ENCODE measurements at regions of chr7 and their contacts with region 1.

Region 1: GRCh38 chr7:136009488-136010079 is 32.4 kb upstream of the MTPN start:
- DNase-seq: no peak
- H3K4me3 ChIP-seq: no peak overlapping the region
- H3K27ac ChIP-seq: no peak overlapping the region
- H3K4me1 ChIP-seq: no peaks in the 10 kb centered on the region
- H3K27me3 ChIP-seq: no peaks in the 10 kb centered on the region
- CTCF ChIP-seq: peak; percentile 57 to 65 (median 61)
- EP300 ChIP-seq: no peak
- POLR2A ChIP-seq: no peak

Region 2: DNA sequence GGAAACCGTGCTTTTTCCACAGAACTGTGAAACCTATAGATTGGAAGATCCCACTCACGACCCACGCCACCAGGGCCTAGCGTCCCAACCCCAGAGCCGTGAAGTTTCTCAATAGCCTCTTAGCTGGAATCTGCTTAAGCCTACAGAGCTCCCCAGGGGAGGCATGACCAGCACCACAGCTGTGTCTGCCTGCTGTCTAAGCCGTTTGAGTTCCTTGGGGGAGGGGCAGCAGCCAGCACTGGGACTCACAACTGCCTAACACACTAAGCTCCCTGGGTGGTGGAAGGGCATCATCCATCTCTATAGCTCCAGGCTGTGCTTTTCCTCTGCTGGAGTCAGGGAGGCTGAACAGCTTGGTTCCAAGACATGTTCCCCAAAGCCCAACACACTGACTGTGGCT is 887.7 kb before region 1 on chr7:
- intact Hi-C with region 1: no loop called
- DNase-seq: no peak
- H3K4me3 ChIP-seq: no peak overlapping the region
- H3K27ac ChIP-seq: no peak overlapping the region
- H3K4me1 ChIP-seq: no peaks in the 10 kb centered on the region
- H3K27me3 ChIP-seq: no peaks in the 10 kb centered on the region
- CTCF ChIP-seq: no peak
- EP300 ChIP-seq: no peak
- POLR2A ChIP-seq: no peak

Region 3: DNA sequence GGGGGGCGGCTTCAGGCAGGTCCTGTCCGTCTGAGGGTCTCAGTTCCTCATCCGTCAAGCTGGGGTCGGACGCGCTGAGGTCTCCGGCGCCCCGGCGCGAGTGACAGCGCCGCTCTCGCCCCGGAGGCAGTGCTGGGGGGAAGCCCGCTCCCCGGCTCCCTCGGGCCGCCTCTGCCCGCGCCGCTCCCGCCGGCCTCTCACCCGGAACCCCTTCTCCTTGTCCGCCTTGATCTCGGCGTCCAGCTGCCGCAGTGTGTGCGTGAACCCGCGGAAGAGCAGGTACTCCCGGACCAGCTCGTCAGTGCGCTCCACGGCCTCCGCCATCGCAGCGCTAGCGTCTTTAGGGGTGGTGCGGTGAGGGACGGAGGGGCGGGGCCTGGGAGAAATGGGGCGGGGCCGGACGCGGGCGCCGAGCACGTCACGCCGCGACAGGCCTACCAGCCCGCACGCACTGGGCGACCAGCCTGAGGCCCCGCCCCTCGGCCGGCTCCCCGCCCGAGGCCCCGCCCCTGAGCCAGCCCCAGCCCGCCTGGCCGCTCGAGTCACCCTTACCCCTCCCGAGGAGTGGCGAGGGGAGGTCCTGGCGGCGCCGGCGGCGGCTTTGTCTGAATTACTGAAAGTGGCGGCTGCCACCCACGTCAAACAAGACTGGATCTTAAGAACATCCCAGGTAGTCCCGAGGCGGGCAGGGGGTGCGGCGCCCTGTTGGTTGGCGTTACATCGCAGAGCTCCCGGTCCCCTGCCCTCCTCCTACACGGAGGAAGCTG is 798.2 kb before region 1 on chr7 and contains the start of gene WDR91:
- intact Hi-C with region 1: no loop called
- DNase-seq: peak; percentile 96 to 99 (median 97)
- H3K4me3 ChIP-seq: peak within 1 kb of the TSS; percentile 68
- H3K27ac ChIP-seq: peak within 1 kb of the TSS; percentile 90 to 94
- H3K4me1 ChIP-seq: peaks cover 1% of the 10 kb centered on the region
- H3K27me3 ChIP-seq: no peaks in the 10 kb centered on the region
- CTCF ChIP-seq: peak in 2 of 3 donors; percentile 17
- EP300 ChIP-seq: no peak
- POLR2A ChIP-seq: peak; percentile 74
- total RNA-seq, gene WDR91: 14.7 to 56.3 (median 32.7) TPM

Region 4: DNA sequence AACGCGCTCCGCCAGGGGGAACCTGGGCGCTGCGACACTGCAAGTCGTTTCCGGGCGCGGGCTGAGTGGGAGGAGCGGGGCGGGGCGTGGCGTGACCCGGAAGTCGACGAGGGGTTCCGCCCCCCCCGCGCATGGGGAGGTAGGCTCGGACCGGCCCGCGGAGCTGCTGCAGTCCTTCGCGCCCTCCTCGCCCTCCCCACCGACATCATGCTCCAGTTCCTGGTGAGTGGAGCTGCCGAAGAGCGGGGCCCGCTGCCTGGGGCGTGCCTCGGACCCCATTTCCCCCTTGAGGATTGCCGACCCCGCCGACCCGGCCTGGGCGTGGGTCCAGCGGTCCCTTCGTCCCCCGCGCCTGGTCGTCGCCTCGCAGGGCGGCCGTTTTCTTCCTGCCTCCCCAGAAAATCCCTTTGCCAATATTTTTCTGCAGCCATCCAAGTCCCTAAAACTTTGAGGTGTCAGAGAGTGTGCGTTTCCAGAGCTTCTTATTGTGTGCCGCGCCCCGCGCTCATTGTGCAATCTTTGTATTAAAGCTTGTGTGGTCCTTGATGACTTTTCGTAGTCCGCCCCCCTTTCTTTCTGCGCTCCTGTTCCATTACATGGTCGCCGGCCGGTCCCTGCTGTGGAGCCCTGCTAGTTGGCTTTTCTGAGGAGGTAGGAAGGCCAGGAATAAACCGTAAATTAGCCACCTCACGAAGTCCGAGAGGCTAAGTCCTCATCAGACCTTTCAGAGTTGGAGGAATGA is 347.0 kb before region 1 on chr7 and contains the start of gene STMP1:
- intact Hi-C with region 1: loop called in 1 of 4 experiments (anchors 10 kb)
- DNase-seq: peak; percentile 95 to 98 (median 98)
- H3K4me3 ChIP-seq: peak within 1 kb of the TSS; percentile 62
- H3K27ac ChIP-seq: peak within 1 kb of the TSS; percentile 81 to 86
- H3K4me1 ChIP-seq: peaks cover 3% of the 10 kb centered on the region
- H3K27me3 ChIP-seq: no peaks in the 10 kb centered on the region
- CTCF ChIP-seq: peak in 1 of 3 donors; percentile 77
- EP300 ChIP-seq: no peak
- POLR2A ChIP-seq: peak; percentile 85
- total RNA-seq, gene STMP1: 11.0 to 24.3 (median 19.7) TPM

Region 5: DNA sequence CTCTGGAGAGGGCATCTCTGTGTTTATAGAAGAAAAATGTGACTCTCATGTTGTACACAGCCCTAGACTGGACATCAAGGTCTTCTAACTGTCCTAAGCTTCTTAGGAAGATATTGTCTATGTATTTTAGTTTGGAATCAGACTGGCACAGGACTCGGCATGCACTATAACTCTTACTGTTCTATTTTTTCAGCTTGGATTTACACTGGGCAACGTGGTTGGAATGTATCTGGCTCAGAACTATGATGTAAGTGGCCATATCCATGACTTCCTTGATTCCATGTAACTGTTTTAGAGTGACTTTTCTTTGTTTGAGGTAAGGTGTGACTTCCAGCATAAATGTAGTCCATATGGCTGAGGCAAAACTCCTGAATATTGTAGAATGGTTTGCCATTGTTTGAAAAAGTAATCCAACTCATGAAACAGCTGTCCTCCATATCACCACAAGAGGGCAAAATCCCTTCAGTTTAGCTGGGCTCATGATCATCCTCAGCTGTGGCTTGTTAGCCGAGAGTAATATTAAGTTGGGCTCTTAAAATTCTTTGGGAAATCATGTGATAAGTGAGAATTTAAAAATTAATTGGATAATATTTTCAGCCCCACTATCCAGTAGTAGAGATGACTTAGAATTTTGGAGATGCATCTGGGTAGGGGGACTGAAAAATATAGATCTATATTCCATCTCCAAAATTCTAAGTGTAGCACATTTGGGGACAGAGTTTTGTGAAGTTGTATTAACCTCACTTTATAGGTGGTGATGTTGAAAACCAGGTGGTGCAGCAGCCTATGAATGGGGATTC is 336.8 kb before region 1 on chr7:
- intact Hi-C with region 1: loop called in 2 of 4 experiments (anchors 10 kb)
- DNase-seq: peak in 1 of 5 donors; percentile 34
- H3K4me3 ChIP-seq: no peak overlapping the region
- H3K27ac ChIP-seq: no peak overlapping the region
- H3K4me1 ChIP-seq: no peaks in the 10 kb centered on the region
- H3K27me3 ChIP-seq: no peaks in the 10 kb centered on the region
- CTCF ChIP-seq: peak; percentile 51 to 76 (median 60)
- EP300 ChIP-seq: no peak
- POLR2A ChIP-seq: no peak

Region 6: DNA sequence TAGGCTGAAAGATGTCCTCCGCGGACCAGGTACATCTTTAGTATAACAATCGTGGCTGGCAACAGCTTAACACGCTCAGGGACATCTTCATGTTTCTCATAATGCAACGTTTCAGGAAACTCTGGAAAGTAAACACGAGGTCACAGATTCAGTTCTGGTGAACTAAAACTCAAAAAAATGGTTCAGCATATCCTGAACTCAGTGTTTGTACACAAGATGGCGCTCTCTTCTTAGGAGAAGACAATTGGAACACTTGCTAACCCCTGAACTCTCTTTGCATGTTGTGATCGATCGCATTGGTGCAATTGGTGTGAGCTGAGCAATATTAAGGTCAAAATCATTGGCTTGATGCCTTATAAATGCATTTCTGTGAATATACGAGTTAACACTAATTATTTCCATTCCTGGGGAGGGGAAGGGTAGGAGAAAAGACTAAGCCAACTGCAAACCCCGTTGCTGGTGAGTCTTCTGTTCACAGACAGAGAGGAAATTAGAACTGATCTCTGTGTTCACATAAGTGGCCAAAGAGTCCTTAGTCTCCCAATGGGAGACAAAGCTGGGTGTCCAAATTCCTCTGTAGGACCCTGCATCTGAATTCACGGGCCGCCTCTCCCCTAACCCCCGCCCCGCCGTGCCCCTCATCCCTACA is 208.4 kb before region 1 on chr7:
- intact Hi-C with region 1: loop called in 3 of 4 experiments (anchors 5 to 10 kb)
- DNase-seq: no peak
- H3K4me3 ChIP-seq: no peak overlapping the region
- H3K27ac ChIP-seq: no peak overlapping the region
- H3K4me1 ChIP-seq: peaks cover 6% of the 10 kb centered on the region
- H3K27me3 ChIP-seq: no peaks in the 10 kb centered on the region
- CTCF ChIP-seq: peak in 2 of 3 donors; percentile 42 to 76
- EP300 ChIP-seq: no peak
- POLR2A ChIP-seq: no peak

Region 7: GRCh38 chr7:136964347-136964746 is 954.8 kb after region 1 on chr7:
- intact Hi-C with region 1: no loop called
- DNase-seq: no peak
- H3K4me3 ChIP-seq: no peak overlapping the region
- H3K27ac ChIP-seq: no peak overlapping the region
- H3K4me1 ChIP-seq: no peaks in the 10 kb centered on the region
- H3K27me3 ChIP-seq: no peaks in the 10 kb centered on the region
- CTCF ChIP-seq: no peak
- EP300 ChIP-seq: no peak
- POLR2A ChIP-seq: no peak

Measured in ovary (tissue), 10 donors.